Right ventricle myocardium inferior (tissue), 1 donor: ENCODE measurements at regions of chr6 and their contacts with region 1.

Region 1: GRCh38 chr6:6998194-6998569 is 109.6 kb upstream of the RREB1 start:
- DNase-seq: no peak
- ATAC-seq: no peak

Region 2: GRCh38 chr6:7042056-7042653 is 44.0 kb after region 1 on chr6:
- intact Hi-C with region 1: loop called (anchors 1 kb)
- DNase-seq: no peak
- ATAC-seq: peak; percentile 14

Region 3: DNA sequence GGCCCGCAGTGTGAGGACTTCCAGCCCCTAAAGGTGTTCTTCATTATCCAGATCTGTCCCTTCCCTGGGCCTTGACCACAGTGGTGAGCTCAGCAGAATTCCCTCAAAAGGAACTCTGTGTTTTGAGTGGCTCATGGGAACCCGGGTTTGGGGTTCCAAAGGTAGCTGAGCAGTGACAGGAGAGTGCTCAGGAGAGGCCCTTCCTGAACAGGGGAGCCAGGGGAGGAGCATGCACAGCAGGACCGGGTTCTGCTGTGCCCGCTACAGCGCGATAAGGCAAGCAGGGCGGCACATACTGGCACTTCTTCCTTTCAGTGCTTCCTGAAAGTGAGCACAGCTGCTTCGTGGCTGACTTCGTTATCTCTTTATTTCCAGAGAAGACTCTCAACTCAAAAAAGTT is 226.5 kb after region 1 on chr6:
- intact Hi-C with region 1: loop called (anchors 10 kb)
- DNase-seq: no peak
- ATAC-seq: peak; percentile 54